ENCODE measurements at regions of chr12 and their contacts with region 1.

Region 1: GRCh38 chr12:6278439-6279255 is 31.8 kb upstream of the PLEKHG6 start:
- DNase-seq: peak; percentile 95
- H3K4me3 Mint-ChIP-seq: peak overlapping the region; percentile 70
- H3K27ac Mint-ChIP-seq: peak overlapping the region; percentile 92
- H3K4me1 Mint-ChIP-seq: peaks cover 58% of the 10 kb centered on the region
- H3K27me3 Mint-ChIP-seq: no peaks in the 10 kb centered on the region
- CTCF ChIP-seq: peak; percentile 96

Region 2: DNA sequence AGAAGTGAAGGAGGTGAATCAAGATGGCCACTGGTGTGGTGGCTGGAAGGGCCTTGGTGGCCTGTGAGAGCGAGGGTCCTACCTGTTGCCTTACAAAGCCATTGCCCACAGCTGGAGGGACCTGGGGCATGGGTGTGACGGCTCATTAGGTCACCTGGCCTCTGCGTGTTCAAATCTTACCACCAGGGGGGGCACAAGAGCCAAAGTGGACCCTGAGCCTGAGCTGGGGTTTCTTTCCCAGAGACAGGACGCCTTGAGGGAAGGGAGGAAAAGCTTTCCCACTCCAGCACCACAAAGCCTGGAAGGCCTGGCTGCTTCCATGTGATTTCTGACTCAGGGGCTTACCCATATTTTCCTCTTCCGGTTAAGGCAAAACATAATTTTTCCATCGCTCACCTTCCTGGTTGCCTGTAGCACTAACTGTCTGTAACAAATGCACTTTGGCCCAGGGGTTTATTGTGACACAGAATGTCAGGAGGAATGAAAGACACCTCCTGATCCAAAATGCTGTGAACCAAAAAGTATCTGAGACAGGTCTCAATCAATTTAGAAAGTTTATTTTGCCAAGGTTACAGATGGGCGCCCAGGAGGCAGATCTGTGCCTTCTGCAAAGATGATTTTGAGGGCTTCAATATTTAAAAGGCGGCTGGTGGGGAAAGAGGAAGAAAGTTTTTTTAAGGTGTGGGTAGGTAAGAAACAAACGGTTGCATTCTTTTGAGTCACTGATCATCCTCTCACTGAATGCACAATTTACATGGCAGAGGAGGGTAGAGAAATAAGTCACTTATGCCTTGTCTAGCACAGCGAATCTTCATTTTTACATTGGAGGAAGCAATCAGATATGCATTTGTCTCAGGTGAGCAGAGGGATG is 82.7 kb before region 1 on chr12:
- CTCF ChIA-PET with region 1: interaction called, 48 read pairs
- intact Hi-C with region 1: loop called (anchors 1 kb)
- DNase-seq: peak; percentile 93
- H3K4me3 Mint-ChIP-seq: no peak overlapping the region
- H3K27ac Mint-ChIP-seq: peak overlapping the region; percentile 14
- H3K4me1 Mint-ChIP-seq: peaks cover 33% of the 10 kb centered on the region
- H3K27me3 Mint-ChIP-seq: peaks cover 18% of the 10 kb centered on the region
- CTCF ChIP-seq: peak; percentile 92

Region 3: GRCh38 chr12:6215932-6216494 is 62.6 kb before region 1 on chr12:
- CTCF ChIA-PET with region 1: interaction called, 3 read pairs
- intact Hi-C with region 1: loop called (anchors 5 kb)
- DNase-seq: peak; percentile 96
- H3K4me3 Mint-ChIP-seq: peak overlapping the region; percentile 58
- H3K27ac Mint-ChIP-seq: peak overlapping the region; percentile 97
- H3K4me1 Mint-ChIP-seq: peaks cover 59% of the 10 kb centered on the region
- H3K27me3 Mint-ChIP-seq: no peaks in the 10 kb centered on the region
- CTCF ChIP-seq: no peak

Region 4: GRCh38 chr12:6295094-6295811 is 16.6 kb after region 1 on chr12:
- CTCF ChIA-PET with region 1: interaction called, 11 read pairs
- intact Hi-C with region 1: no loop called
- DNase-seq: peak; percentile 89
- H3K4me3 Mint-ChIP-seq: peak overlapping the region; percentile 12
- H3K27ac Mint-ChIP-seq: peak overlapping the region; percentile 98
- H3K4me1 Mint-ChIP-seq: peaks cover 48% of the 10 kb centered on the region
- H3K27me3 Mint-ChIP-seq: no peaks in the 10 kb centered on the region
- CTCF ChIP-seq: no peak